BJ (cell line): ENCODE measurements at regions of chr1 and their contacts with region 1.

Region 1: DNA sequence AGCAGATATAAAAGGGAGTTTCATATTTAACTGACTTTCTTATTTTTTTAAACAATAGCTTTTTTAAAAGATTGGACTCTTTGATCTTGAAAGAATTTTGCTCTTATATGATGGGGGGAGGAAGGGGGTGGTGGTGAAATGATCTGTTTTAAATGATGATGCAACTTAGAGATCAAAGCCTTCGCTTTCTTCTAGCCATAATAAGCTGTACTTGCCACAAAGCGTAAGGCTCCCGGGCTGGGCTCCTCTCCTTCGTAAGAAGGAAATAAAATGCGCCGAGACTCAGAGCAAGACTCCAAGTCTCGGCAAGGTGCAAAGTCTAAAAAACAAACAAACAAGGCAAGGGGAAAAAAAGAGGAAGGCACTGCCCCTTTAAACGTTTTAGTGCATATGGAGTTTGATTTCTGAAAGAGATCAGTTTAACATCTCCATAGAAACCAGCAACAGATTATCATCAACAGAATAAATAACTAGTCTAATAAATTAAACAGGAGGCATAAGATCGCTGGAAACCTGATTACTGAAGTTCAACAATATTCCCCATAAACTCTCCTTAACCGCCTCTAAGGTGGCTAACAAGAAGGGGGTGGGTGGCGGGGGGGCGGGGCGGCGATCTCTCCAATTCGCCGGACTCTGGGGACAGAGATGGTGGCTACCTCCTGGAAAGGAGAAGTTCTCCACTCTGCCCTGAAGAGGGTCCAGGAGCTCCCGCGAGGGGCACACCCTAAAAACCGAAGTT is 3.1 kb downstream of the CASZ1 start:
- DNase-seq: no peak
- H3K4me3 ChIP-seq: no peak overlapping the region
- H3K27me3 ChIP-seq: peaks cover 39% of the 10 kb centered on the region
- CTCF ChIP-seq: no peak

Region 2: DNA sequence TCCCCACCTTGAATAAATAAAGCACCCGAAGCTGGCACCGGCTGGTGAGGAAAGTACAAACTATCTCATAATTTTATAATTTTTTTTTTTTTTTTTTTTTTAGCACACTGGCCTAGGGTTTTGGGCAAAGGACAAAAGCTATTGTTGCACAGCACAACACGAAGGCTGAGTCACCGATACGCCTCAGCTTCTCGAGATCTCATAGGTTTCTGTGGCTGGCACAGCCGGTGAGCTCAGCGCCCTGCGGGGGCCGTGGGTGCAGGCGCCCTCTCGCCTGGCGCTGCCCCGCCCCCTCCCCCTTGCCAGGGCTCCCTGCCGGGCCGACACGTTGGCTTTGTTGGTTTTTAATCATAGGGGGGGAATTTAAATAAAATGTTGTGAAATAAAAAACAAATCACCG is 14.1 kb before region 1 on chr1:
- CTCF ChIA-PET with region 1: no interaction called
- POLR2A ChIA-PET with region 1: no interaction called
- DNase-seq: no peak
- H3K4me3 ChIP-seq: no peak overlapping the region
- H3K27me3 ChIP-seq: peaks cover 8% of the 10 kb centered on the region
- CTCF ChIP-seq: no peak

Region 3: GRCh38 chr1:10814312-10814711 is 21.0 kb after region 1 on chr1:
- CTCF ChIA-PET with region 1: no interaction called
- POLR2A ChIA-PET with region 1: no interaction called
- DNase-seq: no peak
- H3K4me3 ChIP-seq: no peak overlapping the region
- H3K27me3 ChIP-seq: peaks cover 24% of the 10 kb centered on the region
- CTCF ChIP-seq: no peak

Region 4: GRCh38 chr1:10824821-10825423 is 31.6 kb after region 1 on chr1:
- CTCF ChIA-PET with region 1: no interaction called
- POLR2A ChIA-PET with region 1: interaction called, 20 read pairs
- DNase-seq: peak; percentile 16
- H3K4me3 ChIP-seq: no peak overlapping the region
- H3K27me3 ChIP-seq: peaks cover 8% of the 10 kb centered on the region
- CTCF ChIP-seq: no peak